ENCODE measurements at regions of chr22 and their contacts with region 1.

Region 1: DNA sequence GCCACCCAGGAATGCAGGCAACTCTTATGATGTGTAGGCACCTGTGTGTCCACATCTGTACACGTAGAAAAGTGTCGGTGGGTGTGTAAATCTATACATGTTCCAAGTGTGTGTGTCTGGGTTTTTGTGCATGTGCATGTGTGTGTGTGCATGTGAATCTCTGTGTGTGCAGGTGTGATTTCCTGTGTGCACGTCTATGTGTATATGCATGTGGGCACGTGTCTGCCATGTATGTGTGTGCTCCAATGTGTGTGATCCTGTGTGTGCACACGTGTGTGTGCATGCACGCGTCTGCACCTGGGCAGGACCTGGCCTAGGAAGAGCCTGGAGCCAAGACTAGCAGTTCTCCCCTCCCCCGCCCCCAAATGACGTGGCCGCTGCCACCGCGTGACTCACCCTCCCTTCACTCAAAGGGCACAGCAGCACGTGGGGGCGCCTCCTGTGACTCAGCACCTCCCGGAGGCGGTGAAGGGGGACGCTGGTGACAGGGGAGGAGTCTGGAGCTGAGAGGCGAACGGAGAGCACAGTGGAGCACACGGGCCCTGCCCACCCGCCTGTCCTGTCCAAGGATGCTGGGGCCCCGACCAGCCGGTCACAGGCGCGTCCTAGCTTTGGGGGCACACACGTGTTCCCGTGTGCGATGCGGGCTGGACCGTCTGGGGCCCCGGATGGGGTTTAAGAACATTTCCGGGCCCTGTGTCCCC is 10.1 kb downstream of the PIM3 start:
- DNase-seq: peak; percentile 97 to 99
- H3K4me3 ChIP-seq: peak overlapping the region; percentile 56
- H3K27ac ChIP-seq: peak overlapping the region; percentile 67
- H3K4me1 ChIP-seq: peaks cover 13% of the 10 kb centered on the region
- H3K27me3 ChIP-seq: no peaks in the 10 kb centered on the region
- CTCF ChIP-seq: no peak

Region 2: GRCh38 chr22:49880281-49880680 is 90.4 kb before region 1 on chr22:
- CTCF ChIA-PET with region 1: no interaction called
- POLR2A ChIA-PET with region 1: no interaction called
- intact Hi-C with region 1: no loop called
- DNase-seq: no peak
- H3K4me3 ChIP-seq: no peak overlapping the region
- H3K27ac ChIP-seq: no peak overlapping the region
- H3K4me1 ChIP-seq: no peaks in the 10 kb centered on the region
- H3K27me3 ChIP-seq: no peaks in the 10 kb centered on the region
- CTCF ChIP-seq: no peak

Region 3: DNA sequence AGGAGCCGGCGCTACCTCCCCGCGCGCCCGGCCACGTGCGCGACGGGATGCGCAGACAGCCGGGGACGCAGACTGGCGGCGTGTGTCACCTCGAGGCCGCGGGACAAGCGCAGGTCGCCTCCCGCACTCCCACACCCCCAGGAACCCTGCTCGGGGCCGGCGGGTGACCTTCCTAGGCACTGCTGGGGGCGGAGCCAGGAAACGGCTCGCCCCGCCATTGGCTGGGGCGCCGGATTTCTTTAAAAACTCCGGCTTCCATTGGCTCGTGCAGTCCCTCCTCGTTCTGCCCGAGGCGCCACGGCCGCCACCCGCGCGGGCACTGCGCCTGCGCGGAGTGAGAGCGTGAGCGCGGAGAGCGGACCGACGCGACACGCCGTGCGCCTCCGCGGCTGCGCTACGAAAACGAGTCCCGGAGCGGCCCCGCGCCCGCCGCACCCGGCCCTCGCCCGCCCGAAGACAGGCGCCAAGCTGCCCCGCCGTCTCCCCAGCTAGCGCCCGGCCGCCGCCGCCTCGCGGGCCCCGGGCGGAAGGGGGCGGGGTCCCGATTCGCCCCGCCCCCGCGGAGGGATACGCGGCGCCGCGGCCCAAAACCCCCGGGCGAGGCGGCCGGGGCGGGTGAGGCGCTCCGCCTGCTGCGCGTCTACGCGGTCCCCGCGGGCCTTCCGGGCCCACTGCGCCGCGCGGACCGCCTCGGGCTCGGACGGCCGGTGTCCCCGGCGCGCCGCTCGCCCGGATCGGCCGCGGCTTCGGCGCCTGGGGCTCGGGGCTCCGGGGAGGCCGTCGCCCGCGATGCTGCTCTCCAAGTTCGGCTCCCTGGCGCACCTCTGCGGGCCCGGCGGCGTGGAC is 10.3 kb before region 1 on chr22 and contains the start of gene PIM3:
- CTCF ChIA-PET with region 1: no interaction called
- POLR2A ChIA-PET with region 1: interaction called, 10 read pairs
- intact Hi-C with region 1: no loop called
- DNase-seq: peak; percentile 95 to 96
- H3K4me3 ChIP-seq: peak within 1 kb of the TSS; percentile 97
- H3K27ac ChIP-seq: peak within 1 kb of the TSS; percentile 66
- H3K4me1 ChIP-seq: peaks cover 36% of the 10 kb centered on the region
- H3K27me3 ChIP-seq: no peaks in the 10 kb centered on the region
- CTCF ChIP-seq: no peak
- total RNA-seq, gene PIM3: 67.0 and 84.8 TPM in 2 replicates